ENCODE measurements at regions of chr9 and their contacts with region 1.

Region 1: GRCh38 chr9:112166172-112167140 is 8.6 kb downstream of the SUSD1 start:
- DNase-seq: no peak
- ATAC-seq: no peak
- H3K4me3 ChIP-seq: no peak overlapping the region
- H3K27ac ChIP-seq: no peak overlapping the region
- H3K4me1 ChIP-seq: peaks cover 8% of the 10 kb centered on the region
- H3K27me3 ChIP-seq: no peaks in the 10 kb centered on the region
- CTCF ChIP-seq: no peak
- EP300 ChIP-seq: no peak
- POLR2A ChIP-seq: no peak
- RAD21 ChIP-seq: no peak

Region 2: GRCh38 chr9:112050544-112051475 is 115.6 kb before region 1 on chr9:
- CTCF ChIA-PET with region 1: no interaction called
- POLR2A ChIA-PET with region 1: no interaction called
- RAD21 ChIA-PET with region 1: no interaction called
- SMC1A ChIA-PET with region 1: no interaction called
- in situ Hi-C with region 1: no loop called
- intact Hi-C with region 1: no loop called
- DNase-seq: no peak
- ATAC-seq: no peak
- H3K4me3 ChIP-seq: no peak overlapping the region
- H3K27ac ChIP-seq: no peak overlapping the region
- H3K4me1 ChIP-seq: peaks cover 31% of the 10 kb centered on the region
- H3K27me3 ChIP-seq: no peaks in the 10 kb centered on the region
- CTCF ChIP-seq: no peak
- EP300 ChIP-seq: no peak
- POLR2A ChIP-seq: no peak
- RAD21 ChIP-seq: no peak

Region 3: DNA sequence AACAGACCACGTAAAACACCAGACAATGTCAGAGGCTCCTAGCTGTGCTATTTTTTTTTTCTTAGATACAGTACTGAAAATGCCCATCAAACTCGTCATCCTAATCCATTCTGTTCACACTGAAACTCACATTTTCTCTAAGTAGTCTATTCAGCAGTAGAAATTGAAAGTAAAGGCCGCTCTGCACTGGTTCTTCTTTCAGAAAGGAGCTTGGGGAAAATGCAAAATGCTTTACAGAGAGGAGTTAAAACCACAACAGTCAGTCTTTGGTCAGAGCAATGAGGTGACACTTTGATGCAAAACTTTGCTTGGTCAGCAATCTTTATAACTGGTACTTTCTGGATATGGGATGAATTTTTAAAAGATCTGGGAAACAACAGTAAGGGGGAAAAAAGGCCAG is 52.5 kb after region 1 on chr9:
- CTCF ChIA-PET with region 1: no interaction called
- POLR2A ChIA-PET with region 1: no interaction called
- RAD21 ChIA-PET with region 1: no interaction called
- SMC1A ChIA-PET with region 1: interaction called, 3 read pairs
- in situ Hi-C with region 1: loop called (anchors 5 kb)
- intact Hi-C with region 1: no loop called
- DNase-seq: peak; percentile 85
- ATAC-seq: peak; percentile 98
- H3K4me3 ChIP-seq: no peak overlapping the region
- H3K27ac ChIP-seq: peak overlapping the region; percentile 65
- H3K4me1 ChIP-seq: peaks cover 26% of the 10 kb centered on the region
- H3K27me3 ChIP-seq: no peaks in the 10 kb centered on the region
- CTCF ChIP-seq: no peak
- EP300 ChIP-seq: peak in 1 of 2 experiments; percentile 50; a peak in 1 of 4 replicates
- POLR2A ChIP-seq: no peak
- RAD21 ChIP-seq: 0 out of 2 replicates have a peak, but pooled peaks have one; percentile 29

Measured in GM12878 (cell line).